ENCODE measurements at regions of chr7 and their contacts with region 1.

Region 1: DNA sequence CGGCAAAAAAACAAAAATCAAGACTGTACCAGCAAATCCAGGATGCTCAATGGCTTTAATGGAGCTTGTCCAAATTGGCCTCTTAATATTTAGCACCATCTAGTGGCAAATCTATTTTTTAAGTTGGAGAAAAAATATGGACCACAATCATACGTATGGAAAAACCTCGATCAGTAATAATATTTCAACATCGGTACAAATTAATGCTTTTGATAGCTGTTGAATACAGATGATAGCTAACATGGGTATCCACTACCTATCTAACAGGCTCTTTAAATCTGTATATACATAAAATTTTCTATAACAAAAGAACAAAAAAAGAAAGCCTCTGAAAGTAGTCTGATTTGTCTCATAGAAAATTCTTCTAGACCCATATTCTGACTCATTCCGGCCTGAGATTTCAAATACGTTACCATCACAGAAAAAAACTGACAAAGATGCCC is 29.2 kb downstream of the COA1 start:
- DNase-seq: peak; percentile 43
- H3K4me3 ChIP-seq: no peak overlapping the region
- H3K27ac ChIP-seq: no peak overlapping the region
- H3K27me3 ChIP-seq: no peaks in the 10 kb centered on the region
- CTCF ChIP-seq: peak; percentile 73

Region 2: DNA sequence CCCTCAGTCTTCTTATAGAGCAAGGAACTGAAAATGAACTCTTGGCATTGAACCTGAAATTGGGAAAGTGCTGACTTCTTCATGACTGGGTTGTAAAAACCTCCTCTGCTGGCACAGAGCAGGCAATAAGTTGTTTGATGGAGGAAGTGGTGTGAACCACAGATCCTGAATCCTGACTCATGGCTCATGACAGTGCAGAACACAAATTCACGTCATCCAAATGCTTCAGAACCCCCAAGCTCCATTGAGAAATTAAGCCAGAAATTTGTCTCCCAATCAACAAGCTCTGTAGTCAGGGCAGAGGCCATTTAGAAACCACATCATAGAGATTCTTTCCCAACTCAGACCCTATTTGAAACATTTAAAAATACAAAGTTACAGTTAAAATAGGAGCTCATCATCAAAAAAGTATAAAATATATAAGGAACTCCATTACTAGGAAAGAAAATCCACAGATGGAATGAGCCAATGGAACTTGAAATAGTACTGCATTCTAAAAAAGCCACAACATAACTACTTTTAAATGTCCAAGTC is 127.5 kb before region 1 on chr7:
- CTCF ChIA-PET with region 1: interaction called, 11 read pairs
- POLR2A ChIA-PET with region 1: interaction called, 3 read pairs
- DNase-seq: peak; percentile 98
- H3K4me3 ChIP-seq: no peak overlapping the region
- H3K27ac ChIP-seq: peak overlapping the region; percentile 85
- H3K27me3 ChIP-seq: no peaks in the 10 kb centered on the region
- CTCF ChIP-seq: no peak

Region 3: DNA sequence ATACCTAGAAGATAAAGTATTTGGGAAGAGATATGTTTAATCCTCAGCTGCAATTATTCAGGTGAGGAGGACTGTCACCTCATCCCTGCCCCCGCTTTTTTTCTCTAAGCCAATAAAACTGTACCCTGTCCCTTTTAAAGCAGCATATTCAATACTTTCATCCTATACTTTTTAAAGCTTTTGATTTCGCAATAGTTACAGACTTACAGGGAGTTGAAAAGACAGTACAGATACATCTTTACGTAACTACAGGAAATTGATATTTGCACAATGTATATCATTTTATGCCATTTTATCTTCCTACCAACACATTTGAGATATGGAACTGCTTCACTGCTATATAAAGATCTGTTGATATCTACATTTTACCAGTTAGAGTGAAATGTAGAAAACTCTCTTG is 69.6 kb before region 1 on chr7:
- CTCF ChIA-PET with region 1: interaction called, 14 read pairs
- POLR2A ChIA-PET with region 1: no interaction called
- DNase-seq: no peak
- H3K4me3 ChIP-seq: no peak overlapping the region
- H3K27ac ChIP-seq: no peak overlapping the region
- H3K27me3 ChIP-seq: no peaks in the 10 kb centered on the region
- CTCF ChIP-seq: no peak

Region 4: GRCh38 chr7:43647673-43648472 is 52.2 kb before region 1 on chr7:
- CTCF ChIA-PET with region 1: interaction called, 37 read pairs
- POLR2A ChIA-PET with region 1: interaction called, 7 read pairs
- DNase-seq: peak; percentile 99
- H3K4me3 ChIP-seq: peak overlapping the region; percentile 42
- H3K27ac ChIP-seq: peak overlapping the region; percentile 100
- H3K27me3 ChIP-seq: no peaks in the 10 kb centered on the region
- CTCF ChIP-seq: no peak

Region 5: GRCh38 chr7:43686991-43687390 is 13.1 kb before region 1 on chr7:
- CTCF ChIA-PET with region 1: interaction called, 13 read pairs
- POLR2A ChIA-PET with region 1: no interaction called
- DNase-seq: no peak
- H3K4me3 ChIP-seq: no peak overlapping the region
- H3K27ac ChIP-seq: no peak overlapping the region
- H3K27me3 ChIP-seq: no peaks in the 10 kb centered on the region
- CTCF ChIP-seq: no peak

Region 6: GRCh38 chr7:43721193-43721806 is 21.2 kb after region 1 on chr7:
- CTCF ChIA-PET with region 1: interaction called, 24 read pairs
- POLR2A ChIA-PET with region 1: no interaction called
- DNase-seq: no peak
- H3K4me3 ChIP-seq: no peak overlapping the region
- H3K27ac ChIP-seq: no peak overlapping the region
- H3K27me3 ChIP-seq: no peaks in the 10 kb centered on the region
- CTCF ChIP-seq: peak; percentile 64

Region 7: DNA sequence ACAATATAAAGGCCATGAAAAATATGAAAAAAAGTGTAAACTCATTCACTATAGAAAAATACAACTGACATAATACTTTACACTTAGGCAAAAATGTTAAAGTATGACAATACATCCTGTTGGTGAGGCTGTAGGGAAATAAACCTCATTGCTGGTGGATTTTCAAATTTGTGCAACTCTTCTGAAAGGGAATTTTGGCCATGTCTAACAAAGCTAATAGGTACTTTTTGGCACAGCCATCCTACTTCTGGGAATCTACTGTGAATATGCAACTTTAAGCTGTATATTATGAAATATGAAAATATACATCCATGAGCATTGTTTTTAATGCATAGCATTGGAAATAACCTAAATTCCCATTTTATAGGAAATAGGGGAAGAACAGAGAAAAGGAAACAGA is 42.6 kb after region 1 on chr7:
- CTCF ChIA-PET with region 1: no interaction called
- POLR2A ChIA-PET with region 1: no interaction called
- DNase-seq: no peak
- H3K4me3 ChIP-seq: no peak overlapping the region
- H3K27ac ChIP-seq: no peak overlapping the region
- H3K27me3 ChIP-seq: no peaks in the 10 kb centered on the region
- CTCF ChIP-seq: no peak

Region 8: DNA sequence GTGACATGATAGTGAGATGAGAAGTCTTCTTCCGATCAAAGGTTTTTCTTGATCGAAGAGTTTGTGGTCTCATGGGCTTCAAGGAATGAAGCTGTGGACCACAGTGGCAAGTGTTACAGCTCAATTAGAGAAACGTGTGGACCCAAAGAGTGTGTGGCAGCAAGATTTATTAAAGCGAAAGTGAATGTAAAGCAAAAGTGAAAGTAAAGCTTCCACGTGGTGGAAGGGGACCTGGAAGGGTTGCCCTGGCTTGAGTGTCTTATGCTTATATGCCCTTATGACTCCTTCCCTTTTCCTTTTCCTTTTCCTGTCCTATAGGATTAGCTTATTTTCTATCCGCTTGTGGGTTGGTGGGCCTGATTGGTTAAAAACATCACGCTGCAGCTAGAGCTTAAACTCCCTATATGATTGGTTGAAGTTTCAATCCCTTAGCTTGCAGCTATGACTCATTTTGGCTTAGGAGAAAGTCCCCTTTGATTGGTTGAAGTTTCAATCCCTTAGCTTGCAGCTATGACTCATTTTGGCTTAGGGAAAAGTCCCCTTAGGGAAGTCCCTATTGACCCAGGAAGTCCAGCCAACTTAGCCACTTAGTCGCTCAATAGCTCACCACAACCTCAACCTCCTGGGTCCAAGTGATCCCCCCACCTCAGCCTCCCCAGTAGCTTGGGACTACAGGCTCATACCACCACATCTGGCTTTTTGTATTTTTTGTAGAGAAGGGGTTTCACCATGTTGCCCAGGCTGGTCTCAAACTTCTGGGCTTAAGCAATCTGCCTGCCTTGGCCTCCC is 134.6 kb after region 1 on chr7:
- CTCF ChIA-PET with region 1: interaction called, 59 read pairs
- POLR2A ChIA-PET with region 1: no interaction called
- DNase-seq: no peak
- H3K4me3 ChIP-seq: no peak overlapping the region
- H3K27ac ChIP-seq: no peak overlapping the region
- H3K27me3 ChIP-seq: no peaks in the 10 kb centered on the region
- CTCF ChIP-seq: no peak

Measured in AG04450 (cell line).